Spleen (tissue), 13 donors: ENCODE measurements at regions of chr3 and their contacts with region 1.

Region 1: GRCh38 chr3:134197681-134198261 is 52.9 kb downstream of the RYK start:
- DNase-seq: no peak
- H3K4me3 ChIP-seq: no peak overlapping the region
- H3K27ac ChIP-seq: no peak overlapping the region
- H3K4me1 ChIP-seq: no peaks in the 10 kb centered on the region
- H3K27me3 ChIP-seq: no peaks in the 10 kb centered on the region
- CTCF ChIP-seq: peak; percentile 11 to 75 (median 59)
- POLR2A ChIP-seq: no peak

Region 2: GRCh38 chr3:133812872-133813271 is 384.9 kb before region 1 on chr3:
- intact Hi-C with region 1: loop called (anchors 10 kb)
- DNase-seq: no peak
- H3K4me3 ChIP-seq: no peak overlapping the region
- H3K27ac ChIP-seq: no peak overlapping the region
- H3K4me1 ChIP-seq: peaks cover 0 to 9% (median 0%) of the 10 kb centered on the region in 6 donors
- H3K27me3 ChIP-seq: no peaks in the 10 kb centered on the region
- CTCF ChIP-seq: no peak
- POLR2A ChIP-seq: no peak

Region 3: DNA sequence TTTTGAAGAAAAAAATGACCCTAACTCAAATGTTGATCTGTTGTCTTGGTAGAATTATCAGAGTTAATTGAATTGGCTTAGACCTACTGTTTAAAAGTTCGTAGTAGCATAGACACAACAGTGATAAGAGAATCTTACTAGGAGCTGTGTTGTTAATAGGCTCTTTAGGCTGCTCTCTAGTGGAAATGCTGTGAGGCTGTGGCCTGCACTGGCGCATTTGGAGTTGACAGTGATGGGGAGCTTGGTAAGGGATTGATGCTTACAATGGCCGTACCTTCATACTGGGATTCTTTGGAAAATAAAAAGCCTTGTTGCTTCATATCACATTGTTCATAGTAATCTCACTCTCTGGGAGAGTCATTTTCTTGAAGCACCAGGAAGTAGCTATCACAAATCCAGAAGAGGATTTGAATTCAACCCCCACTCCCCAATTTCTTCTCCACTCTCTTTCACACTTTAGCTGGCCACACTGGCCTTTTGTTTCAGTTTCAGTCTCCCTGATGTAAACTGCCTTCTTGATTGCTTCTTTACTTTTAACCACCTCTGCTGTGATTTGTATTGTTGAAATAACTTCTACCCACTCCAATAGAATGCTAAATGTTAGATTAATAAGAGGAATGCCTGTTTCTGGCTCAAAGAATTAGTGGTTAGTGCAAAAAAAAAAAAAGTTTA is 344.7 kb after region 1 on chr3:
- intact Hi-C with region 1: no loop called
- DNase-seq: no peak
- H3K4me3 ChIP-seq: peak overlapping the region in 1 of 8 donors; percentile 47
- H3K27ac ChIP-seq: peak overlapping the region in 6 of 8 donors; percentile 51 to 87 (median 70)
- H3K4me1 ChIP-seq: peaks cover 0 to 19% (median 4%) of the 10 kb centered on the region in 6 donors
- H3K27me3 ChIP-seq: no peaks in the 10 kb centered on the region
- CTCF ChIP-seq: no peak
- POLR2A ChIP-seq: no peak